PC-3 (cell line): ENCODE measurements at regions of chrX and their contacts with region 1.

Region 1: DNA sequence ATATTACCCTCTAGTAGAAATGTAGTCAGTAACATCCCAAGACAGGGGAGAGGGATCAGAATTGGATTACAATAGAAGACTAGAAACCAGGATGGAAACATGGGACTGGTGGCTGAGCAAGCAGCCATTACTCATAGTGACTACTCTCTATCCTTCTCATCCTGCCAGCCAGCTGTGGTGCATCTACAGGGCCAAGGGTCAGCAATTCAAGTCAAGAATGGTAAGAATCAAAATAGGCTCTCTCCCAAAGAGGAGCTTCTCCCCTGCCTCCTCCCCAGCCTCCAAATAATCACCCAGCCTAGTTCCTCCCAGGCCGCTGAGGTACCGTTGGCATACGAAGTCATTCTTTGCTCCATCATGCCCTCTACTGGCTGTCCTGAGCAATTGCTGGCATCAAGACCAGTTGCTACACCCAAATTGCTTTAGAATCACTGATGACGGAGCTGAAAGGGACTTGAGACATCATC is 19.4 kb downstream of the AWAT2 start:
- DNase-seq: peak; percentile 69
- ATAC-seq: peak; percentile 50
- H3K4me3 ChIP-seq: no peak overlapping the region
- H3K27ac ChIP-seq: no peak overlapping the region
- H3K4me1 ChIP-seq: no peaks in the 10 kb centered on the region
- H3K27me3 ChIP-seq: no peaks in the 10 kb centered on the region
- CTCF ChIP-seq: peak; percentile 82

Region 2: DNA sequence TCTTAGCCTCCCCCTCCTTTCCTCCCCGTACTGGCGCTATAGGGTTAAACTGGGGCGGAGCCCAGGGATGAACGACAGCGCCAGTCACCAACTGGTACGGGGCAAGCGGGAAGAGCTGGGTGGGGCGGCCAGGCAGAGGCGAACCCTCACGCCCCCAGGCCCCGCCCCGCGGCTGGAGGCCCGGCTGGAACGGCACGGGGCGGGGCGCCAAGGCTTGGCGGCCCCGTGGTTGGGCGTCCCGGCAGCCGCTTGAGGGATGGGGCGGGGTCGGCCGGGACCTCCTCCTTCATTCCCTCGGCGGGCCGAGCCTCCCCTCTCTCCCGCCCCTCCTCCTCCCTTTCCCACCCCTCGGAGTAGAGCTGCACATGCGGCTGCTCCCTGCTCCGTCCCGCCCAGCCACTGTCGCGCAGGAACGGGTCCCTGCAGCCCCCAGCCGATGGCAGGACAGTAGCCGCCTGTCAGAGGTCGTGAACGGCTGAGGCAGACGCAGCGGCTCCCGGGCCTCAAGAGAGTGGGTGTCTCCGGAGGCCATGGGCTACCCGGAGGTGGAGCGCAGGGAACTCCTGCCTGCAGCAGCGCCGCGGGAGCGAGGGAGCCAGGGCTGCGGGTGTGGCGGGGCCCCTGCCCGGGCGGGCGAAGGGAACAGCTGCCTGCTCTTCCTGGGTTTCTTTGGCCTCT is 414.4 kb before region 1 on chrX and contains the start of gene EDA:
- CTCF ChIA-PET with region 1: no interaction called
- POLR2A ChIA-PET with region 1: no interaction called
- intact Hi-C with region 1: loop called (anchors 5 kb)
- DNase-seq: peak; percentile 77
- ATAC-seq: peak; percentile 87
- H3K4me3 ChIP-seq: peak within 1 kb of the TSS; percentile 62
- H3K27ac ChIP-seq: no peak within 1 kb of the TSS
- H3K4me1 ChIP-seq: peaks cover 6% of the 10 kb centered on the region; the same call in 1 of the 2 replicates
- H3K27me3 ChIP-seq: peaks cover 28% of the 10 kb centered on the region
- CTCF ChIP-seq: no peak
- total RNA-seq, gene EDA: 0.15 and 1.0 TPM in 2 replicates

Region 3: GRCh38 chrX:70001269-70001668 is 29.1 kb before region 1 on chrX:
- CTCF ChIA-PET with region 1: no interaction called
- POLR2A ChIA-PET with region 1: no interaction called
- intact Hi-C with region 1: no loop called
- DNase-seq: no peak
- ATAC-seq: no peak
- H3K4me3 ChIP-seq: no peak overlapping the region
- H3K27ac ChIP-seq: no peak overlapping the region
- H3K4me1 ChIP-seq: no peaks in the 10 kb centered on the region
- H3K27me3 ChIP-seq: no peaks in the 10 kb centered on the region
- CTCF ChIP-seq: no peak

Region 4: GRCh38 chrX:70096052-70096451 is 65.7 kb after region 1 on chrX:
- CTCF ChIA-PET with region 1: interaction called, 5 read pairs
- POLR2A ChIA-PET with region 1: no interaction called
- intact Hi-C with region 1: loop called (anchors 1 kb)
- DNase-seq: peak; percentile 56
- ATAC-seq: peak; percentile 89
- H3K4me3 ChIP-seq: no peak overlapping the region
- H3K27ac ChIP-seq: no peak overlapping the region
- H3K4me1 ChIP-seq: no peaks in the 10 kb centered on the region
- H3K27me3 ChIP-seq: no peaks in the 10 kb centered on the region
- CTCF ChIP-seq: peak; percentile 74